ENCODE measurements at regions of chr17 and their contacts with region 1.

Region 1: DNA sequence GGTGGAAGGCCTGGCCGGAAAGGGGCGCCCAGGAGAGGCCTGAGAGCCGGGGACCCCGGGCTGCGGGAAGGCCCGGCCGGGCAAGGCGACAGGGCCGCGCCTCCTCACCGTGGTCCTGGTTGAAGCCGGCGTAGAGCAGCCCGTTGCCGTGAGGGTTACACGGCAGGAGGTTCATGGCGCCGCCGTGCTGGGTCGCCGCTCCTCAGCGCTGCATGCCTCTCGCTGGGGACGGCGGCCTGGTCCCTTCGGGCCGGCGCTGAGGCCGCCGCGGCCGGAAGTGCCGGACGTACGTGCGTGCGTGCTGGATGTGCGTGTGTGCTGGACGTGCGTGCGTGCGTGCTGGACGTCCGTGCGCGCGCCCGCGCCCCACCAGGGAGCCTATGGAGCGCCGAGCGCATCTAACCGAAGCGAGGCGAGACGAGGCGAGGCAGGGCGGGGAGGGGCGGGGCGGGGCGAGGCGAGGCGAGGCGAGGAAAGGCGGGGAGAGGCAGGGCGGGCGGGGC is at the start of gene WDR45B:
- DNase-seq: peak; percentile 80 to 95
- ATAC-seq: peak; percentile 88 to 96 (median 92)
- H3K4me3 ChIP-seq: peak within 1 kb of the TSS; percentile 56
- H3K4me3 Mint-ChIP-seq: peak within 1 kb of the TSS; percentile 89
- H3K27ac ChIP-seq: peak within 1 kb of the TSS; percentile 97
- H3K27ac Mint-ChIP-seq: peak within 1 kb of the TSS; percentile 77 to 80
- H3K4me1 ChIP-seq: peaks cover 24% of the 10 kb centered on the region
- H3K4me1 Mint-ChIP-seq: peaks cover 24 to 38% of the 10 kb centered on the region in 2 donors
- H3K27me3 ChIP-seq: no peaks in the 10 kb centered on the region
- H3K27me3 Mint-ChIP-seq: no peaks in the 10 kb centered on the region
- CTCF ChIP-seq: no peak
- total RNA-seq, gene WDR45B: 81.8 to 112 (median 94.6) TPM

Region 2: DNA sequence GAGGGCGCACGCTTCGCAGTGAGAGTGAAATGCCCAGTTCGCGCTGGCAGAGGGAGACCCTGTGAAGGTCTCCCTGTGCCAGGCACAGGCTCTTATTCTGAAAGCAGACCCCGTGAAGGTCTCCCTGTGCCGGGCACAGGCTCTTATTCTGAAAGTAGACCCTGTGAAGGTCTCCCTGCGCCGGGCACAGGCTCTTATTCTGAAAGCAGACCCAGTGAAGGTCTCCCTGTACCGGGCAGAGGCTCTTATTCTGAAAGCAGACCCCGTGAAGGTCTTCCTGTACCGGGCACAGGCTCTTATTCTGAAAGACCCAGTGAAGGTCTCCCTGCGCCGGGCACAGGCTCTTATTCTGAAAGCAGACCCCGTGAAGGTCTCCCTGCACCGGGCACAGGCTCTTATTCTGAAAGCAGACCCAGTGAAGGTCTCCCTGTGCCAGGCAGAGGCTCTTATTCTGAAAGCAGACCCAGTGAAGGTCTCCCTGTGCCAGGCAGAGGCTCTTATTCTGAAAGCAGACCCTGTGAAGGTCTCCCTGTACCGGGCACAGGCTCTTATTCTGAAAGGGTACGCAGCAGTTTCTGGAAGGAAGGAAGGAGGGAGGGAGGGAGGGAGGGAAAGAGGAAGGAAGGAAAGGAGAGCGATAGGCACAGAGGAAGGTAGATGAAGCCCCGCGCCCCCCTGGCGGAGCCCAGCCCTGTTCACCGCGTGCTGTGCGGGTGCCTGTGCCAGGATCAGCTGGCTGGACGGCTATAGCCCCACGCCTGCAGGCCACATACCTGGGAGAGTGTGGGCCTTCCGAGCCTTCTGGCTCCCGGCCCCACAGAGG is 55.2 kb before region 1 on chr17:
- intact Hi-C with region 1: loop called (anchors 2 kb)
- DNase-seq: peak; percentile 56 to 80
- ATAC-seq: peak; percentile 39 to 57 (median 54)
- H3K4me3 ChIP-seq: peak overlapping the region; percentile 40
- H3K4me3 Mint-ChIP-seq: peak overlapping the region; percentile 79
- H3K27ac ChIP-seq: peak overlapping the region; percentile 86
- H3K27ac Mint-ChIP-seq: peak overlapping the region; percentile 97 to 98
- H3K4me1 ChIP-seq: peaks cover 52% of the 10 kb centered on the region
- H3K4me1 Mint-ChIP-seq: peaks cover 33 to 46% of the 10 kb centered on the region in 2 donors
- H3K27me3 ChIP-seq: no peaks in the 10 kb centered on the region
- H3K27me3 Mint-ChIP-seq: no peaks in the 10 kb centered on the region
- CTCF ChIP-seq: no peak

Measured in natural killer cell (primary cell).